ENCODE measurements at regions of chr22 and their contacts with region 1.

Region 1: GRCh38 chr22:22687638-22688500 is 43.5 kb downstream of the GGTLC2 start:
- DNase-seq: peak in 1 of 2 experiments; percentile 52
- ATAC-seq: peak; percentile 64 to 85; a peak in 3 of 6 replicates
- H3K4me3 ChIP-seq: no peak overlapping the region
- H3K27ac ChIP-seq: peak overlapping the region in 1 of 2 experiments; percentile 29; a peak in 1 of 6 replicates
- H3K4me1 ChIP-seq: peaks cover 42% of the 10 kb centered on the region
- CTCF ChIP-seq: peak; percentile 55
- EP300 ChIP-seq: no peak
- POLR2A ChIP-seq: no peak
- RAD21 ChIP-seq: peak; percentile 52 to 66; a peak in 4 of 5 replicates

Region 2: DNA sequence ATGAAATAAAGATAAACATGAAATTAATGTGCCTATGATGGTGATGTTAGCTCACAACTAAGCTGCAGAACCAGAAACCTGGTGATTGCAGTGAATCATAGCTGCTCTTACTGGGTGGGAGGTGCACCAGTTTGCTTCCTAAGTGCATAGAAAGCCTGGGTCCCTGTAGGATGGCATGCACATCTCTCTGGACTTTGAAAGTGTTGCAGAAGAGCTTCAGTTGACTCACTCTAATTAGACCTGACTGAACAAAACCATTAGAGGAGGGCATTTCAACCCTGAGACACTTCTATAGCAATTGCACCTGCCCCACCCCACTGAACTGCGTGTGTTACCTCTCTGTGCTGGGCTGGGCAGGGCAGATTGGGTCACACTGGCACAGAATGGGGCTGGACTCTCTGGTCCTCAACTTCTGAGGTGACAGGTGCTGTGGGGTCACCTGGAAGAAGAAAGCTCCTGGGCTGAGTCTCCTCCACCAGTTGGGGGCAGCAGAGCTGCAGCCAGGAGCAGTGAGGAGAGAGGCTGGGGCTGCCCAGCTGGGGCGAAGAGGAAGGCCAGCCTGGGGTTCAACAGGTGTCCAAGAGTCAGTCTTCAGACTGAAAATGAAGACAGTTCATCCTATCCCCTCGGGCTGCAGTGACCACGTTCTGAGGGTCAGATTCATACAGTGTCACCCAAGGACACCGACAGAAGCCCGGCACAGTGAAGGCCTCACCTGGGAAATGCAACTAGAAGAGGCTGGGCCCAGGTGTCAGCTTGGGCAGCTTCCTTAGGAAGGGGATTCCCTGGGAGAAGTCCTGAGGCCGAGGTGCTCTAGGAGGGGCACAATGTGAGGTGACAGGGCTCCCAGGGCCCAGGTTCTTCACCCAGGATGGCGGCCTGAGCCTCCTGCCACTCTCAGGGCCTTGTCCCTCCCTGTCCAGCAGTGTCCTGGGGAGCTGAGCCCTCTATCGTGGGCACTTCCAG is 14.7 kb after region 1 on chr22:
- CTCF ChIA-PET with region 1: interaction called, 69 read pairs
- POLR2A ChIA-PET with region 1: no interaction called
- DNase-seq: no peak
- ATAC-seq: peak; percentile 26 to 77; a peak in 3 of 6 replicates
- H3K4me3 ChIP-seq: no peak overlapping the region
- H3K27ac ChIP-seq: peak overlapping the region; percentile 83 to 86
- H3K4me1 ChIP-seq: peaks cover 34% of the 10 kb centered on the region
- CTCF ChIP-seq: 0 out of 3 replicates have a peak, but pooled peaks have one; percentile 20
- EP300 ChIP-seq: no peak
- POLR2A ChIP-seq: no peak
- RAD21 ChIP-seq: peak in 1 of 2 experiments; percentile 23; a peak in 1 of 5 replicates

Region 3: GRCh38 chr22:22710719-22711531 is 23.1 kb after region 1 on chr22:
- CTCF ChIA-PET with region 1: interaction called, 69 read pairs
- POLR2A ChIA-PET with region 1: no interaction called
- DNase-seq: peak; percentile 37 to 46
- ATAC-seq: peak; percentile 79 to 94
- H3K4me3 ChIP-seq: no peak overlapping the region
- H3K27ac ChIP-seq: peak overlapping the region; percentile 58 to 67; a peak in 5 of 6 replicates
- H3K4me1 ChIP-seq: peaks cover 18% of the 10 kb centered on the region
- CTCF ChIP-seq: peak; percentile 74
- EP300 ChIP-seq: no peak
- POLR2A ChIP-seq: no peak
- RAD21 ChIP-seq: peak; percentile 31 to 37; a peak in 3 of 5 replicates

Region 4: GRCh38 chr22:22893077-22893805 is 205.4 kb after region 1 on chr22:
- CTCF ChIA-PET with region 1: no interaction called
- POLR2A ChIA-PET with region 1: no interaction called
- DNase-seq: no peak
- ATAC-seq: no peak
- H3K4me3 ChIP-seq: no peak overlapping the region
- H3K27ac ChIP-seq: no peak overlapping the region
- H3K4me1 ChIP-seq: no peaks in the 10 kb centered on the region
- CTCF ChIP-seq: no peak
- EP300 ChIP-seq: no peak
- POLR2A ChIP-seq: no peak
- RAD21 ChIP-seq: no peak

Measured in A549 (cell line).